H1 (cell line): ENCODE measurements at regions of chr16 and their contacts with region 1.

Region 1: DNA sequence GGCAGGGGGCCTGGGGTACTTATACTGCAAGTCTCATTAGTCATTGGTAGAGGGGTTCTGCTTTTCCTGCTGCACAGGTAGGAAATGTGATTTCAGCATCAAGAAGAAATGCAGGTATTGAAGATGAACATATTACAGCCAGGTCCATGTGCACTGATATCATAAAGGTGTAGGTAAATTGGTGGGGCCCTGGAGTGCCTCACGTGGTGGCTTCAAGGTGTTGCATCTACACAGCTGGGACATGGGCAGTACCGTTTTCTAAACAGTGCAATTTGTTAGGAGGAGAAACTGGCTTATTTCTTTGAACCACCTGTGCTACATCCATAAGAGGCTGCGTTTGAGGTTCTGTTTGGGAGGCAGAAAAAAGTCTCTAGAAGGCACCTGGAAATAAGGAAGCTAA is 618.1 kb upstream of the RBFOX1 start:
- DNase-seq: no peak
- H3K4me3 ChIP-seq: no peak overlapping the region
- H3K27ac ChIP-seq: no peak overlapping the region
- H3K4me1 ChIP-seq: no peaks in the 10 kb centered on the region
- H3K27me3 ChIP-seq: no peaks in the 10 kb centered on the region
- CTCF ChIP-seq: peak in 2 of 3 experiments; percentile 33 to 37; a peak in 2 of 4 replicates
- EP300 ChIP-seq: no peak
- POLR2A ChIP-seq: no peak
- RAD21 ChIP-seq: no peak; a peak in 1 of 4 replicates

Region 2: DNA sequence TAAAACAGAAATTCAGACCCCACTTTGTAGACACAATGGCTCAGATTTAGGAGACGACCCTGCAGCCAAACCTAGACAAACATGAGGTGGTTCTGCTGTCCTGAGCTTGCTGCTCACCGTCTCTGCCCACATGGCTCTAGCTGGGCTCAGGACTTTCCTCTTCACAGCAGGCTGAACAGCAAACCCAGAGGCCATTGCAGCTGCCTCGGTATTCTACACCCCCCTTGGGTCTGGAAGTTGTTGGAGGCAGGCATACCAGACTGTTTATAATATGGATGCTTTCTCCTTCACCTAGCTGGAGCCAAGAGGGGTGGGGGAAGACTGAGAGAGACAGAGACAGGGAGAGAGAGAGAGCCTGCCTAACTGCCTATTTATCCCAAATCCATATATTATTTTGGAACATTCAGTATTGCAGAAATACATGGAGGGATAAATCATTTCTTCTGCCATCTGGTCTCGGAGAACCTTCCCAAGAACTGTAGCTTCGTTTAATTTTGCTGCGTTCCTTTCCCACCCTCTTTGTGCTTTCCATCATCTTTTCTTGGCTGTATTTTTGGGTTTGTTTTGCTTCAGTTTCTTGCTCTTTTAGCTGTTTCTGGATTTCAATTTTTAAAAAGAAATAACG is 10.1 kb before region 1 on chr16:
- CTCF ChIA-PET with region 1: interaction called, 10 read pairs
- POLR2A ChIA-PET with region 1: no interaction called
- DNase-seq: no peak
- H3K4me3 ChIP-seq: no peak overlapping the region
- H3K27ac ChIP-seq: no peak overlapping the region
- H3K4me1 ChIP-seq: peaks cover 0 to 3% (median 0%) of the 10 kb centered on the region in 4 experiments; a peak in 2 of 7 replicates
- H3K27me3 ChIP-seq: no peaks in the 10 kb centered on the region
- CTCF ChIP-seq: no peak
- EP300 ChIP-seq: no peak
- POLR2A ChIP-seq: no peak
- RAD21 ChIP-seq: no peak

Region 3: GRCh38 chr16:6735631-6736030 is 21.1 kb after region 1 on chr16:
- CTCF ChIA-PET with region 1: no interaction called
- POLR2A ChIA-PET with region 1: no interaction called
- DNase-seq: no peak
- H3K4me3 ChIP-seq: no peak overlapping the region
- H3K27ac ChIP-seq: no peak overlapping the region
- H3K4me1 ChIP-seq: no peaks in the 10 kb centered on the region
- H3K27me3 ChIP-seq: no peaks in the 10 kb centered on the region
- CTCF ChIP-seq: no peak
- EP300 ChIP-seq: no peak
- POLR2A ChIP-seq: no peak
- RAD21 ChIP-seq: no peak